Activated CD4-positive, alpha-beta T cell treated with anti-CD3 and anti-CD28 coated beads, Interleukin-2, amount 10 ng/mL, durations not matched to agents 24 days and 14 days (primary cell): ENCODE measurements at regions of chr13 and their contacts with region 1.

Region 1: DNA sequence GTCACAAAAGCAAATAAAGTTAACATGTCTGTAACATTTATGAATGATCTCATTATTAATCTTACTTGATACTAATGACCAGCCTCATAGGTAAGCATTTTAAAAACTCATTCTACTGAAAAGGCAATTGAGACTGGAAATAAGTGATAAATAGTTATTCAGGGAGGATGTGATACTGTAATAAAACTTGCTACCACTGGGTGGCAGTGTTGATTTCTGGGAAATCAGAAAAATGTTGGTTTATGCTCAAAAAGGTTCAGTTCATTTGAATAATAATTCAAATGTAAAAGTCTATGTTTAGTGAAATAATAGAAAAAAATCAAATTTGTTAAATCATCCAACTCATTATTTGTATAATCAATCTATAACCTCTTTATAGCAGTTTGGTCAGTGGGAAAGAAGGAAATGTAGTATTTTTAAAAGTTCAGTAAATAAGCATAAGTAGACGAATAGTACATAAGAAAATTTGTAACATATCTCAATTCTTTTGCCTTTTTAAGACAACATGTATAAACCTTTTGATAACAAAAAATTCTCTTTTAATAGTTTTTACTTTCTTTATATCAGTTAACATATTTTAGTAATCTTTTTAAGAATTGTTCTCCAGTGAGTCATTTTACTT is 9.6 kb downstream of the ABHD13 start:
- DNase-seq: peak; percentile 84
- H3K4me3 Mint-ChIP-seq: no peak overlapping the region
- H3K27ac Mint-ChIP-seq: no peak overlapping the region
- H3K4me1 Mint-ChIP-seq: peaks cover 21% of the 10 kb centered on the region
- H3K27me3 Mint-ChIP-seq: no peaks in the 10 kb centered on the region

Region 2: GRCh38 chr13:108200781-108201398 is 26.9 kb before region 1 on chr13:
- intact Hi-C with region 1: no loop called
- DNase-seq: no peak
- H3K4me3 Mint-ChIP-seq: no peak overlapping the region
- H3K27ac Mint-ChIP-seq: no peak overlapping the region
- H3K4me1 Mint-ChIP-seq: peaks cover 16% of the 10 kb centered on the region
- H3K27me3 Mint-ChIP-seq: peaks cover 24% of the 10 kb centered on the region

Region 3: GRCh38 chr13:108322206-108322824 is 94.6 kb after region 1 on chr13:
- intact Hi-C with region 1: loop called (anchors 5 kb)
- DNase-seq: no peak
- H3K4me3 Mint-ChIP-seq: no peak overlapping the region
- H3K27ac Mint-ChIP-seq: no peak overlapping the region
- H3K4me1 Mint-ChIP-seq: peaks cover 3% of the 10 kb centered on the region
- H3K27me3 Mint-ChIP-seq: peaks cover 34% of the 10 kb centered on the region

Region 4: DNA sequence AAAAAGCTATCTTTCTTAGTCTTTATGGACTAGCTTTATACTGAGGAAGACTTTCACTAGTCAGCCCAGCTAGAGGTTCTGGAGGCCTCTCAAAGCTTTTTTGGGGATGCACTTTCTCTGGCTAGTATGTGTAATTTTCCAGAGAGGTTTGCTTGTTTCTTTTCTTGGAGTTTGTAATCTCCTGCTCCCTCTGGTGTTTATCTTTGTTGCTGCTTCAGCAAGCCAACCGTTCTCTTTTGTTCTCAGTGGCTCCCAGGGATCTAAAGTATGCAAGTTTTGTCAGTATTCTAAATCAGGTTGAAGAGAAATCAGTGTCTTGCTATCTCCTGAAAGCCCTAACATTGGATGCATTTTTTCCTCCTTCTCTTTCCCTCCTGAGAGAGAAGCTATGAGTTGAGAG is 280.5 kb after region 1 on chr13:
- intact Hi-C with region 1: loop called (anchors 5 kb)
- DNase-seq: no peak
- H3K4me3 Mint-ChIP-seq: no peak overlapping the region
- H3K27ac Mint-ChIP-seq: no peak overlapping the region
- H3K4me1 Mint-ChIP-seq: no peaks in the 10 kb centered on the region
- H3K27me3 Mint-ChIP-seq: no peaks in the 10 kb centered on the region

Region 5: DNA sequence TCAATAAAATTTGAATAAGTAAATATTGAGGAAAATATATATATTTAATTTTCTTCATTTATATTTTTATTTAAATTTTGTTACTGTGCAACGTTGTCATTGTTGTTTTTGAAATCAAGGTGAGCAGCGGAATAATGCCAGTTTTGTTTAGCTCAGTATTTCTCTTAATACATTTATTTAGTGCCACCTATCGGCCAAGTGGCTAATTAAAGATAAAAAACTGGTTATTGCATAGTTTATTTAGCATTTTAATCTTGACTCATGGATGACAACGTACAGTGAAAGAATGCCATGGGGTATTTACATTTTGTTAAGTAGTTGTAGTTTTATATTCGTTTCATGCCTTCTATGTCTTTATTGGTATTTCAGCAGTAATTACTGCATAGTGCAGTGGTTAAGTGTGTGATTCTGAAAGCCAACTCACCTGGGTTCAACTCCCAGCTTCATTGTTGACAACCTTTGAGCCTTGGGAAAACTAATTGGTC is 667.5 kb after region 1 on chr13:
- intact Hi-C with region 1: loop called (anchors 5 kb)
- DNase-seq: no peak
- H3K4me3 Mint-ChIP-seq: no peak overlapping the region
- H3K27ac Mint-ChIP-seq: no peak overlapping the region
- H3K4me1 Mint-ChIP-seq: peaks cover 11% of the 10 kb centered on the region
- H3K27me3 Mint-ChIP-seq: peaks cover 11% of the 10 kb centered on the region